Testis (tissue), 5 donors: ENCODE measurements at regions of chr21 and their contacts with region 1.

Region 1: DNA sequence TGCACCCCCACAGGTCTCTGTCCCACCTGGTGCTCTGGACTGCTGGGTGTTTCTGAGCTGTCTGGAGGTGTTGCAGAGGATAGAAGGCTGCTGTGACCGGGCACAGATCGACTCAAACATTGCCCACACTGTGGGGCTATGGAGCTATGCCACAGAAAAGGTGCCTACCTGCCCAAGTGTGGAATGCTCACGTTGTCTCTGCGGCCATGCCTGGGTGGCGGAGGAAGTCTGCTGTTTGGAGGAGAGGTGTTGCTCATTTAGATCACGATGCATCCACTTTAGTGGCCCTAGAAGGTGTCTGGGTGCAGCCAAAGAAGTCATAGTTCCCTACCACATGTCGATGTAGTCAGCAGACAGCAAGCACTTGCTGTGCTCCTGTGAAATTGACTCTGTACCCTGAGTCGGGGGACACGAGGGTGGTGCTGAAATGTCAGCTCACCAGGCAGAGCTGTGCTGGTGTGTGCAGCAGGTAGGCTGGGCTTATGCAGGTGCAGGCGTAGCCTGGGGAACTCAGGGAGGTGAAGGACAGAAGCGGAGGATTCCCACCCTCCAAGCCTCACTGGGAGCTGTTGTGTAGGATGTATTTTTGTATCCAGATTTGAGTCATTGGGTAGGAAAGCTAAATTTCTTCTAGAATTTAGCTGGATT is 32.8 kb upstream of the PWP2 start:
- DNase-seq: no peak
- H3K4me3 ChIP-seq: no peak overlapping the region
- H3K27ac ChIP-seq: no peak overlapping the region
- H3K4me1 ChIP-seq: no peaks in the 10 kb centered on the region
- H3K27me3 ChIP-seq: no peaks in the 10 kb centered on the region
- CTCF ChIP-seq: no peak
- POLR2A ChIP-seq: no peak

Region 2: DNA sequence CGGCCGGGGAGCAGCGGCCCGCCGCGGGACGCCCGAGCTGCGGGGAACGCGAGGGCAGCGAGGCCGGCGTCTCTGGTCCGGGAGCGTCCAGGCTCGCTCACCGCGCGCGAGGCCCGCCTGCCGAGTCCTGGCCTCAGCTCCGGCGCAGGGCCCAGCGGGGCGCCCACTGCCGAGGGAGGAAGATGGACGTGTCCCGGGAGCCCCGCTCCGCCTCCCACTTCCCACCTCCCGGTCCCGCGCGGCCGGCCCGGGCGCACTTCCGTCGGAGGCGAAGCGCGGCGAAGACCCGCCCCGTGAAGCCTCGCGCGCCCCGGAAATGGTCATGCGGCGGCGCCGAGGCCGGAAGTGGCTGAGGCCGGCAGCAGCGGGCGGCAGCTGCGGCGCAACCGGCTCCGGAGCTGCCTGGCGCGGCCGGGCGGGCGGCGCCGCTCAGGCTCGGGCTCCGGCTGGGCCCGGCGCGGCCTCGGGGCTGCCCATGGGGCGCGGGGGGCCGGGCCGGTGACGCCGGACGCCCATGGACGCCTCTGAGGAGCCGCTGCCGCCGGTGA is 62.4 kb before region 1 on chr21 and contains the start of gene TRAPPC10:
- intact Hi-C with region 1: no loop called
- DNase-seq: peak; percentile 86
- H3K4me3 ChIP-seq: peak within 1 kb of the TSS; percentile 89 to 96
- H3K27ac ChIP-seq: peak within 1 kb of the TSS; percentile 91 to 96
- H3K4me1 ChIP-seq: peaks cover 16% of the 10 kb centered on the region
- H3K27me3 ChIP-seq: no peaks in the 10 kb centered on the region
- CTCF ChIP-seq: peak in 1 of 3 experiments; percentile 2
- POLR2A ChIP-seq: peak; percentile 51
- total RNA-seq, gene TRAPPC10: 58.0 to 69.8 TPM

Region 3: DNA sequence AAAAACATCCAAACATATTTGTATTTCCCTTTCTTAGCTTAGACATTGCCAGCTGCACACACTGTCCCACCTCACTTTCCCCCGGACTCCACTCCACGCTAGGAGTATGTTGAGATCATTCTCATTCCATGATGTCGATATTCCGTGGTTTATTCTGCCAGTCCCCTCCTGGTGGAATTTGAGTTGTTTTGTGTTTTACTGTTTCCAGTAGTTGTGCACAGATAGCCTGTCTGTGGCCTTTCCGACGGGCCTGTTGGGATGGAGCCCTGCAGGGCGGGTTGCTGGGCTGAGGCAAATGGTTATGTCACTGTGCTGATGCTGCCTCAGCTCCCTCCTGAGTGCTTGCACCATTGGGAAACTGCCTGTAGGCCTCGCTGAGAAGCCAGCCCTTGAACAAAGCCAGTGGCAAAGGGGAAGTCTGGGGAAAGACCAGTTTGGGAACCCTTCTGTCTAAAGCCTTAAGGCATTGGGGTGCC is 49.5 kb before region 1 on chr21:
- intact Hi-C with region 1: loop called (anchors 10 kb)
- DNase-seq: peak; percentile 56
- H3K4me3 ChIP-seq: no peak overlapping the region
- H3K27ac ChIP-seq: peak overlapping the region in 1 of 2 donors; percentile 12
- H3K4me1 ChIP-seq: peaks cover 18% of the 10 kb centered on the region
- H3K27me3 ChIP-seq: no peaks in the 10 kb centered on the region
- CTCF ChIP-seq: no peak
- POLR2A ChIP-seq: no peak

Region 4: DNA sequence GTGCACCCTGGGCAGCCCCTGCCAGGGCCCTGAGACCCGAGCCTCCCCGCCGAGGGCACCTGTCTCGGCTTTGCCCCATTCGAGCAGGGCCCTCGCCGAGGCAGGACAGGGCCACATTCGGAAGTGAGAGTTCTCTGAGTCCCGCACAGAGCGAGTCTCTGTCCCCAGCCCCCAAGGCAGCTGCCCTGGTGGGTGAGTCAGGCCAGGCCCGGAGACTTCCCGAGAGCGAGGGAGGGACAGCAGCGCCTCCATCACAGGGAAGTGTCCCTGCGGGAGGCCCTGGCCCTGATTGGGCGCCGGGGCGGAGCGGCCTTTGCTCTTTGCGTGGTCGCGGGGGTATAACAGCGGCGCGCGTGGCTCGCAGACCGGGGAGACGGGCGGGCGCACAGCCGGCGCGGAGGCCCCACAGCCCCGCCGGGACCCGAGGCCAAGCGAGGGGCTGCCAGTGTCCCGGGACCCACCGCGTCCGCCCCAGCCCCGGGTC is 211.1 kb after region 1 on chr21 and contains the start of gene AIRE:
- intact Hi-C with region 1: no loop called
- DNase-seq: no peak
- H3K4me3 ChIP-seq: peak within 1 kb of the TSS in 1 of 2 donors; percentile 43
- H3K27ac ChIP-seq: no peak within 1 kb of the TSS
- H3K4me1 ChIP-seq: peaks cover 4% of the 10 kb centered on the region
- H3K27me3 ChIP-seq: no peaks in the 10 kb centered on the region
- CTCF ChIP-seq: no peak
- POLR2A ChIP-seq: no peak
- total RNA-seq, gene AIRE: 0.55 to 0.68 TPM